ENCODE measurements at regions of chr13 and their contacts with region 1.

Region 1: GRCh38 chr13:102845630-102846260 is at the start of gene ERCC5:
- DNase-seq: peak; percentile 97
- H3K4me3 ChIP-seq: peak within 1 kb of the TSS; percentile 72 to 87 (median 78)
- H3K27ac ChIP-seq: peak within 1 kb of the TSS; percentile 94 to 98 (median 96)
- H3K4me1 ChIP-seq: peaks cover 0 to 31% (median 20%) of the 10 kb centered on the region in 4 donors
- H3K27me3 ChIP-seq: no peaks in the 10 kb centered on the region
- CTCF ChIP-seq: no peak
- EP300 ChIP-seq: peak in 1 of 4 donors; percentile 78
- POLR2A ChIP-seq: peak in 1 of 2 donors; percentile 65
- total RNA-seq, gene ERCC5: 30.7 to 68.5 (median 63.3) TPM

Region 2: GRCh38 chr13:102394158-102395053 is 451.3 kb before region 1 on chr13:
- intact Hi-C with region 1: loop called (anchors 5 kb)
- DNase-seq: peak; percentile 97
- H3K4me3 ChIP-seq: peak overlapping the region; percentile 73 to 87 (median 81)
- H3K27ac ChIP-seq: peak overlapping the region; percentile 77 to 85 (median 80)
- H3K4me1 ChIP-seq: peaks cover 0 to 17% (median 11%) of the 10 kb centered on the region in 4 donors
- H3K27me3 ChIP-seq: peaks cover 0 to 5% (median 0%) of the 10 kb centered on the region in 3 donors
- CTCF ChIP-seq: no peak
- EP300 ChIP-seq: peak in 1 of 4 donors; percentile 14
- POLR2A ChIP-seq: no peak

Region 3: DNA sequence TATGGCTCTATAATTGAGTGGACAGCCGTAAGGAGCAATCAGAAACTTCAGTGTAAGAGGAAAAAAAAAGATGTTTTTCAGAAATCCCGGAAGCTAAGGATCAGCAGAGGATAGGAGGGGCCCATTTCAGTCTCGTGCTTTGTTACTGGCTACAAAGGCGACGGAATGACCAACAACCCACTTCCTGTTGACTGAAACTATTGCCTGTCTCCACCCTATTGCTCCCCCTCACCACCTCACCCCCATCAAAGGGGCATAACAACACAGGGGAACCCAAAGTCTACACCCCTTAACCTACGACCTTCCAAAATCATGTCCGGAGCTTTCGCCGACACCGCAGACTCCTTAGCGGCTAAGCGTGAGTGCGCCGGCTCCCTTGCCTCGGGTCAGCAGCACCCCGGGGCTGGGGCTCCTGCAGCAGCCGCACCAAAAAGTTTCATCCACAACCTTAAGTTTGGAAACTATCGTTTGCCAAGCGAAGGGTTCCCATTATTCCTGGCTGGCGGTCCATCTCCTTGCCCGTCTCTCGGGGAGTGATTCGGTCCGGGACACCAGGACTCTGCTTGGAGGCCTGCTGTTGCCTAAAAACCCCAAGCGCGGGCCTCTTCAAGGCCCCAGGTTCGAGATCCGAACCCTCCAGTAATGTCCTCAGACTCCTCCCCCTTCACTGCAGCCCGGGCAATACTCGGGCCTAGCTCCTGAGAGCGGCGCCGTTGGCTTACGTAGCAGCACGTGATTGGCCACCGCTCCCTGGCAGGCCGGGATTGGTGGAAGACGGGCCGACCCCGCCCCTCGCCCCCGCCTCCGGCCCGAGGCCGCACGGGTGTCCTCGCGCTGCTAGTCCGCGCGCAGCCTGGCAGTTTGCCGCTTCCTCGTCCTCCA is 249.4 kb before region 1 on chr13 and contains the start of gene TPP2:
- intact Hi-C with region 1: loop called (anchors 1 kb)
- DNase-seq: peak; percentile 100
- H3K4me3 ChIP-seq: peak within 1 kb of the TSS; percentile 73 to 99 (median 96)
- H3K27ac ChIP-seq: peak within 1 kb of the TSS; percentile 94 to 99 (median 96)
- H3K4me1 ChIP-seq: peaks cover 0 to 58% (median 37%) of the 10 kb centered on the region in 4 donors
- H3K27me3 ChIP-seq: no peaks in the 10 kb centered on the region
- CTCF ChIP-seq: no peak
- EP300 ChIP-seq: no peak
- POLR2A ChIP-seq: peak; percentile 56 to 70
- total RNA-seq, gene TPP2: 33.0 to 54.2 (median 37.3) TPM

Region 4: GRCh38 chr13:102773441-102774215 is 72.1 kb before region 1 on chr13 and contains the start of gene TEX30:
- intact Hi-C with region 1: loop called (anchors 5 kb)
- DNase-seq: peak; percentile 89
- H3K4me3 ChIP-seq: peak within 1 kb of the TSS; percentile 66 to 91 (median 80)
- H3K27ac ChIP-seq: peak within 1 kb of the TSS; percentile 82 to 90 (median 90)
- H3K4me1 ChIP-seq: peaks cover 0 to 18% (median 11%) of the 10 kb centered on the region in 4 donors
- H3K27me3 ChIP-seq: no peaks in the 10 kb centered on the region
- CTCF ChIP-seq: no peak
- EP300 ChIP-seq: no peak
- POLR2A ChIP-seq: peak; percentile 44 to 46
- total RNA-seq, gene TEX30: 8.9 to 17.3 (median 11.7) TPM

Region 5: DNA sequence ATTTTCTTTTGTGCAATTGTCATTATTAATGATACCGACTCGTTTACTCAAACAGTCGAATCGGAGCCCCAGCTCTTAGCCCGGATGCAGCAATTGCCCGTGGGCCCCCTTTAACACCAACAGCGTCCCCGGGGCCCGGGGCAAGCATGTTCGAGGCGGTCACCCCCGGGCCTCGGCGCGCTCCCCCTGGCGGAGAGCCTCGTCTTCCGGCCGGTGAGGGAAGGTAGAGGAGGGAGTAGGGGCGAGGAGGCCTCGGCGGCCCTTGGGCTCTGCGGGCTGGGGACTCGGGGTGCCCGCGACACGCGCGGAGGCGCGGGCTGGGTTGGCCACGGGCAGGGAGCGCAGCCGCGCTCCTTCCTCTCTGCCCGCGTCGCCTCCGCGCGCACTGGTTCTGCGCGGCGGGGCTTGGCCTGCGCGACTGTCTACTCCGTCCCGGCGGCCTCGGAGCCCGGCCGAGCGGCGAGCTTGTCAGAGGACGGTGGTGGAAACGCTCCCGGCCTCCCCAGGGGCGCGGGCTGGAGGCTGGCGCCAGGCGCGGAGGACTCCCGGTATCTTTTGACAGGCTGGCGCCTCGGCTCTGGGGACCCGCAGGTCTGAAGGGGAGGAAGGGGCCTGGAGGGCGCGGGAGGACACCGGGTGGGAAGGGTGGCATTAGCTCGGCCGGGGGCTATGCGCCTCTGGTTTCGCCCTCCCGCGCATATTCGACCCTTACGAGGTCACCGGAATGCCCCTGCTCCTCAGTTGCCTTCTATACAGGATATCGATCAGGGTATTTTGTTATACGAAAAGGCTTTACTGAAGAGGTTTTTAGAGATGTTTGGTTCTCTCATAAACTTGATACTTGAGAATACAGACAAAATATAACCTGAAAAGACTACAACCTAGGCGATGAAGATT is 45.4 kb before region 1 on chr13:
- intact Hi-C with region 1: loop called (anchors 2 kb)
- DNase-seq: peak; percentile 89
- H3K4me3 ChIP-seq: peak overlapping the region; percentile 75 to 91 (median 86)
- H3K27ac ChIP-seq: peak overlapping the region; percentile 84 to 90 (median 84)
- H3K4me1 ChIP-seq: peaks cover 0 to 33% (median 23%) of the 10 kb centered on the region in 4 donors
- H3K27me3 ChIP-seq: no peaks in the 10 kb centered on the region
- CTCF ChIP-seq: peak; percentile 49 to 68 (median 58)
- EP300 ChIP-seq: no peak
- POLR2A ChIP-seq: no peak